ENCODE measurements at regions of chr12 and their contacts with region 1.

Region 1: DNA sequence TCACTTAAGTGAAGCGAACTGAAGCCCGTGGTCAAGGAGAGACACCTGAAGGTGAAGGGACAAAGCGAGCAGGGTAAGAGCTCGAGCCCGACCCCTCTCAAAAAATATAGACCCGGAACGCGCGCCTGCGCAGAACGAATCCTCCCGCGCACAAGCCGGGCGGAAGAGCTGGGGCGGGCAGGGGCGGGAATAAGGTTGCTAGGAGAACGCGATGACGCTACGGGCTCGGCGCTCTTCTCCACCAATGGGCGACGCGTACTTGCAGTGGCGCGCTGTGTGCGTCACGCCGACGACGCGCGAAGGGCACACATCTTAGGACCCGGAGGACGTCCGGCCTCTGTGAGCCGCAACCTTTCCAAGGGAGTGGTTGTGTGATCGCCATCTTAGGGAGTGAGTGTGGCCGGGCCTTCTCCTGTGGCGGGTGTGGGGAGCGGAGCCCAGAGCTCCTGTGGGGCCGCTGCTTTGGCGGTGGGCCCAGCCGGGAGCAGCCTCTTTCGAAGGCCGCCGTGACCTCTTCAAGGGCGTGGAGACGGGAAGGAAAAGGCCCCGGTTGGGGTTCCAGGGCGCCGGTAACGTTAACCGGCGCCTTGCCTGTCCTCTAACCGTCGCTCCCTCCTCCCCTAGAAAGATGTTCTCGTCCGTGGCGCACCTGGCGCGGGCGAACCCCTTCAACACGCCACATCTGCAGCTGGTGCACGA is at the start of gene SLC25A3:
- DNase-seq: peak; percentile 99
- H3K4me3 ChIP-seq: peak within 1 kb of the TSS; percentile 89 to 98 (median 91)
- H3K27ac ChIP-seq: peak within 1 kb of the TSS; percentile 67
- H3K4me1 ChIP-seq: peaks cover 13% of the 10 kb centered on the region
- H3K27me3 ChIP-seq: no peaks in the 10 kb centered on the region
- CTCF ChIP-seq: no peak
- POLR2A ChIP-seq: peak; percentile 99
- total RNA-seq, gene SLC25A3: 774 and 797 TPM in 2 replicates

Region 2: DNA sequence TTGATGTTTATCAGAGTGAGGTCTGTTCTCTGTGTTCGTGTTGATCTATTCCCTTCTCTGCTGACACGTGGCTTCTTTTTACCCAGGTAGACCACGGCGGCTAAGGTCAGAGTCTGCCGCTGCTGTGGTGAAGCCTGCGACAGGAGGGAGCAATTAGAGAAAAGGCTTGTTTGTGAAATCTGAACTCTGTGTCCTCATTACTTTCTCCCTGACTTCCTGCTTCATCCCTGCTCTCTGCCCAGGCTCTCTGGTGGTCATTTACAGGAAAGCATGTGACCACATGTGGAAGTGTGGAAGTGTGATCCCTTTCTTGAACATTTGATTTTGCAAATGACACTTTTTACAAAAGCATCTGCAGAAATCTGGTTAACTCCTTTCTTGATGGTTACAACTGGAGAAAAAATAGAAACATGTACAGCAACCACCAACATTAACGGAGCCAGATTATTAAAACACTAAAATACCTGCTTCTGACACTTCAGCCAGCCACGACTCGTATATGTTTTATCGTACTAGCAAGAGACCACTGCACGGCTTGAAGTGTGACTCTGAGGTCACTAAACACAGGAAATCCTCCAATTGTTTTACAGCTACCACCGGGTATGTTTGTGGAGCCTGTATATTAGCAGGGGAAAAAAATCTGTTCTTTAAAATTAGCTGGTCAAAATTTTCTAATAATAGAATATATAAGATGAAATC is 466.7 kb before region 1 on chr12:
- CTCF ChIA-PET with region 1: no interaction called
- POLR2A ChIA-PET with region 1: no interaction called
- dilution Hi-C with region 1: no loop called
- intact Hi-C with region 1: loop called (anchors 5 kb)
- DNase-seq: peak; percentile 82
- H3K4me3 ChIP-seq: peak overlapping the region in 1 of 3 experiments; percentile 30
- H3K27ac ChIP-seq: peak overlapping the region; percentile 95
- H3K4me1 ChIP-seq: peaks cover 22% of the 10 kb centered on the region
- H3K27me3 ChIP-seq: no peaks in the 10 kb centered on the region
- CTCF ChIP-seq: no peak
- POLR2A ChIP-seq: no peak

Region 3: DNA sequence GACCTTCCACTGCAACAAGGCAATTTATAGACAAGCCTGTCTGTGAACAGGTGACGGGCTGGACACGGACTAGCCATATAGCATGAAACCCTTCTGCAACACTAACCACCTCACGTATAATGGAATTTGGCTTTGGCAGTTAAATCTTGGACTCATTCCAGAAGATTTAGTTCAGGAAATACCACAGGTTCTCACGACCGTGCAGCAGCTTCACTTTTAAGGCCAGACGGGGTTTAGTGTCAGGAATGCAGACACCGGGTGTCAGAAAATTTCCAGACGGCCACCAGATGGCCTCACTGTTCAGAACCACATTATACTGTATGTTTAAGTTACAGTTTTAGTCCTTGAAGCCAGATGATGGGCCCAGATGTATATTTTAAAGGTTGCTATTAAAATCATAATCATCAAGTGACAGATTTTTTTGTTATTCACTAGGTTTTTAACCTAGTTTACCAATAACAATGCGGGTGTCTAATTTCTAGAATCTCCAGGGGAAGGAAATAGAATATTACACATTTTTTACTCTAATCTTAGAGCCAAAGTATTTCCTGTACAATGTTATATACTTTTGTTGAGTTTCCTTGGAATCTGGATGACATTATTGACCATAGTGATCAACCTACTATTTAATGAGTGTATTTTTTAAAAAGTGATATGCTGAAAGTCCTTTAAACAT is 168.6 kb before region 1 on chr12:
- CTCF ChIA-PET with region 1: interaction called, 4 read pairs
- POLR2A ChIA-PET with region 1: no interaction called
- dilution Hi-C with region 1: no loop called
- intact Hi-C with region 1: loop called (anchors 1 kb)
- DNase-seq: peak; percentile 94
- H3K4me3 ChIP-seq: peak overlapping the region in 1 of 3 experiments; percentile 14
- H3K27ac ChIP-seq: peak overlapping the region; percentile 54
- H3K4me1 ChIP-seq: peaks cover 15% of the 10 kb centered on the region
- H3K27me3 ChIP-seq: no peaks in the 10 kb centered on the region
- CTCF ChIP-seq: peak; percentile 65 to 68
- POLR2A ChIP-seq: no peak

Region 4: DNA sequence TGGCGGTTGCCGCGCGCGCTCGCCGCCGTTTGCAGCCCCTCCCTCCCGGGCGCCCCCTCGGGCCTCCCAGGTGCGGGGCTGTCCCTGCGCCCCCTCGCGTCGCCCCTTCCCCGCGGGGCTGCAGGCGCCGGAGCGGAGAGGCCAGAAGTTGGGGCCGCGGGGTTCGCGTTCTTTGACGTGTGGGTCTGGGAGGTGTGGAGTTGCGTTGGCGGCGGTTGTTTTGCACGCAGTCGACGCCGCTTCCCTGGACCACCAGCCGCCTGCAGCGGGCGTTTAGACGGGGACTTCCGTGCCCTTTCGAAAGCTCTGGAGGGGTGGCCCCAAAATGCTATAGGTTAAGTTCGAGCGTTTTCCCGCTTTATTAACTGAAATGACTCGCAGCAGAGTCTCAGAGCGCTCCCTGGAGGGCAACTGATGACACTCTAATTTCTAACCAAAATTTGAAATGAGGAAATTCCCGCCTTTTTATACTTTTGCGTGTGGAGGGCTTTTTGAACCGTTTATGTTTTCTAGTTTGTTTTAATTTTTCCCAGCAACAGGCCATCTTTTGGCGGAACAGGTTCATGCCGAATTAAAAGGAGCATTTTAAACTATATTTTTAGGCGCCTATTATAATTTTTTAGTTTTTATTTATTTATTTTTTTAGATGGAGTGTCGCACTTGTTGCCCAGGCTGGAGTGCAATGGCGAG is 77.2 kb before region 1 on chr12:
- CTCF ChIA-PET with region 1: no interaction called
- POLR2A ChIA-PET with region 1: interaction called, 9 read pairs
- dilution Hi-C with region 1: no loop called
- intact Hi-C with region 1: loop called (anchors 1 kb)
- DNase-seq: peak; percentile 78
- H3K4me3 ChIP-seq: peak overlapping the region; percentile 60 to 99 (median 97)
- H3K27ac ChIP-seq: peak overlapping the region; percentile 85
- H3K4me1 ChIP-seq: peaks cover 16% of the 10 kb centered on the region
- H3K27me3 ChIP-seq: no peaks in the 10 kb centered on the region
- CTCF ChIP-seq: peak; percentile 58 to 61
- POLR2A ChIP-seq: no peak

Region 5: GRCh38 chr12:98635657-98636323 is 42.3 kb after region 1 on chr12:
- CTCF ChIA-PET with region 1: interaction called, 6 read pairs
- POLR2A ChIA-PET with region 1: interaction called, 13 read pairs
- dilution Hi-C with region 1: no loop called
- intact Hi-C with region 1: no loop called
- DNase-seq: peak; percentile 61
- H3K4me3 ChIP-seq: no peak overlapping the region
- H3K27ac ChIP-seq: peak overlapping the region; percentile 10
- H3K4me1 ChIP-seq: peaks cover 27% of the 10 kb centered on the region
- H3K27me3 ChIP-seq: no peaks in the 10 kb centered on the region
- CTCF ChIP-seq: no peak
- POLR2A ChIP-seq: no peak

Region 6: GRCh38 chr12:98653866-98654493 is 60.5 kb after region 1 on chr12:
- CTCF ChIA-PET with region 1: interaction called, 4 read pairs
- POLR2A ChIA-PET with region 1: no interaction called
- dilution Hi-C with region 1: no loop called
- intact Hi-C with region 1: loop called (anchors 1 kb)
- DNase-seq: peak; percentile 66
- H3K4me3 ChIP-seq: no peak overlapping the region
- H3K27ac ChIP-seq: no peak overlapping the region
- H3K4me1 ChIP-seq: peaks cover 4% of the 10 kb centered on the region
- H3K27me3 ChIP-seq: no peaks in the 10 kb centered on the region
- CTCF ChIP-seq: peak; percentile 30 to 36
- POLR2A ChIP-seq: no peak

Region 7: GRCh38 chr12:98686603-98687002 is 93.1 kb after region 1 on chr12:
- CTCF ChIA-PET with region 1: no interaction called
- POLR2A ChIA-PET with region 1: no interaction called
- dilution Hi-C with region 1: no loop called
- intact Hi-C with region 1: no loop called
- DNase-seq: no peak
- H3K4me3 ChIP-seq: no peak overlapping the region
- H3K27ac ChIP-seq: no peak overlapping the region
- H3K4me1 ChIP-seq: no peaks in the 10 kb centered on the region
- H3K27me3 ChIP-seq: no peaks in the 10 kb centered on the region
- CTCF ChIP-seq: no peak
- POLR2A ChIP-seq: no peak